Left colon (tissue), 2 donors: ENCODE measurements at regions of chr12 and their contacts with region 1.

Region 1: DNA sequence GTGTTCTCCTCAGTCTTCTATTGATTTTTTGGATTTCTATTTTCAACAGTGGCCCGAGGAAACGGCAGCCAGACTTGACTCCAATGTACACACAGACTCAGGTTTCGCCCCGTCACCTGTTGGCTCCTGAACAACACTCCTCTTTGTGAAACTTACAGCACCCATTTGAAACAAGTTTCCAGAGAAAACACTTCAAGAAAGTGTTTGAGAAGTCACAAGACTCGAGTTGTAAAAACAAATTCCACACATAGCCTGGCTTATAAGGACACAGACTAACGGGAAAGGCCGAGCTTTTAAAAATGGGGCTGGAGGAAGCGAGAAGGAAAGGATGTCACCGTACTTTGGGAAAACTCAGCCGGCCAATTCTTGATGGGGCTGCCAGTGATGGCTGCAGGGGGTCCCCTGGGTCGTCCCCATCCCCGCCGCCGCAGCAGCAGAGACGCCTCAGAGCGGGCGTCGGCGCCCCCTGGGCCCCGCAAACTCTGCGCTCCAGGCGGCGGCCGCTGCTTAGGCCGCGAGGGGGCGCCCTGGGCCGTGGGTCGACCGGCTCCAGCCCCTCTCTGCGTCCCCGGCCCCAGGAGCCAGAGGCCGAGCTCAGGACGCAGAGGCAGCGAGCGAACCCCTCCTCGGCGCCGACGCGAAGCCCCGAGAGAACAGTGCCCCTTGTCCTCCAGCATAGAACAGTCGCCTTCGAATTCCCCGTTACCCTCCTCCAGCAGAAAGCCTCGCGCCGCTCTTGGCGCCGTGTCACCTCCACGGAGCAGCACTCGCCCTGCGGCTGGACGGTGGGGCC is 106.9 kb downstream of the PRICKLE1 start:
- DNase-seq: peak; percentile 33 to 75
- ATAC-seq: peak; percentile 74

Region 2: GRCh38 chr12:42568952-42569915 is 86.6 kb after region 1 on chr12:
- intact Hi-C with region 1: loop called in 1 of 2 experiments (anchors 5 kb)
- DNase-seq: no peak
- ATAC-seq: peak; percentile 48

Region 3: DNA sequence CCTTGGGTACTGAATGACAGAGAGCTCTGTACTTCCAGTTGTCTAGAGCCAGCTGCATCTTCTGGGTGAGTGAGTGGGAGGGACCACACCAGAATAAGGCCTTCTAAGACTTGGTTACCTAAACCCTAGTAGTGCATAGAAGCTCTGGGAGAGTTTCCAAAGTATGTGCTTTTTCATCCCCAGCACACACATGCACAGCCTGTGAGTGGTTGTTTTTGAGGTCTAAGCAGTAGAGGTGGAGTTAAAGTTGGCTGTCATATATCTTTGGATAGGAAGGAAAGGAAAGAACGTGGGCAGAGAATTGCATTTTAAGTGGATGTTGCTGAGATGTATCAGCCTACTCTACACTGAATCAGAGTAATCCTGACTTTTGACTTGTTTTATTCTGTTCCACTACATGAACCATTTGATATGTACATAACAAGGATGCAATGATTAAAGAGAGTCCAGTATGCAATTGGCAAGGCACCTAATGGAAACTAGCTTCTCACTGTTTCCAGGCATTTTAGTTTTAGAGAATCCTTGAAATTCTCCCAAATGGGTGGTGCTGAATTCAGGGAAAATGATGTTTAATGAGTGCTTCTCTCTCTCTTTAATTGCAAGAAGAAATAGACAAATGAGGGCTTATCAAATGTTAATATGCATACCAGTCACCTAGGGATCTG is 158.7 kb after region 1 on chr12:
- intact Hi-C with region 1: no loop called
- DNase-seq: no peak
- ATAC-seq: no peak